ENCODE measurements at regions of chr5 and their contacts with region 1.

Region 1: GRCh38 chr5:135829681-135830383 is 4.6 kb upstream of the SLC25A48 start:
- DNase-seq: peak; percentile 82
- H3K4me3 ChIP-seq: peak overlapping the region in 1 of 2 experiments; percentile 54; a peak in 1 of 4 replicates
- H3K27ac ChIP-seq: no peak overlapping the region
- H3K4me1 ChIP-seq: no peaks in the 10 kb centered on the region; a peak in 1 of 4 replicates
- H3K27me3 ChIP-seq: peaks cover 32% of the 10 kb centered on the region
- CTCF ChIP-seq: peak; percentile 90
- EP300 ChIP-seq: no peak
- RAD21 ChIP-seq: peak; percentile 84

Region 2: DNA sequence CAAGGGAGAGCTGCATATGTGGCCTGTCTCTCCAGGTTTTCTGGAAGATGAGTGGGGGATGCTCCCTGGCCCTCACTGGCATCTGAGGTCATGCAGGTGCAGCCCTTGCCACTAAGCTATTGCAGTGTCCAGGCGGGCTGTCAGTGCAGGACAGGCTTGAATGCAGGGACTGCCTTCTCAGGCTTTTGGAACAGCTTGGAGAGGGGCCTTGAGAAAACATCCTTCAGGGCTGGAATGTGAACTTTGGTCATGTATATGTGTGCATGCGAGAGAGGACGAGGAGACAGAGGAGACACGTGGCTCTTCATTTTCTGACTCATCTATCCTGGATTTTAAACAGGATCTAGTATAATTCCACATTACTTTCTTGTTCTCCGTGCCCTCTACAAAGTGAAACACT is 521.1 kb before region 1 on chr5:
- CTCF ChIA-PET with region 1: no interaction called
- POLR2A ChIA-PET with region 1: no interaction called
- DNase-seq: no peak
- H3K4me3 ChIP-seq: no peak overlapping the region
- H3K27ac ChIP-seq: no peak overlapping the region
- H3K4me1 ChIP-seq: peaks cover 0 to 3% of the 10 kb centered on the region in 2 experiments; a peak in 1 of 4 replicates
- H3K27me3 ChIP-seq: no peaks in the 10 kb centered on the region
- CTCF ChIP-seq: no peak
- EP300 ChIP-seq: no peak
- RAD21 ChIP-seq: no peak

Region 3: DNA sequence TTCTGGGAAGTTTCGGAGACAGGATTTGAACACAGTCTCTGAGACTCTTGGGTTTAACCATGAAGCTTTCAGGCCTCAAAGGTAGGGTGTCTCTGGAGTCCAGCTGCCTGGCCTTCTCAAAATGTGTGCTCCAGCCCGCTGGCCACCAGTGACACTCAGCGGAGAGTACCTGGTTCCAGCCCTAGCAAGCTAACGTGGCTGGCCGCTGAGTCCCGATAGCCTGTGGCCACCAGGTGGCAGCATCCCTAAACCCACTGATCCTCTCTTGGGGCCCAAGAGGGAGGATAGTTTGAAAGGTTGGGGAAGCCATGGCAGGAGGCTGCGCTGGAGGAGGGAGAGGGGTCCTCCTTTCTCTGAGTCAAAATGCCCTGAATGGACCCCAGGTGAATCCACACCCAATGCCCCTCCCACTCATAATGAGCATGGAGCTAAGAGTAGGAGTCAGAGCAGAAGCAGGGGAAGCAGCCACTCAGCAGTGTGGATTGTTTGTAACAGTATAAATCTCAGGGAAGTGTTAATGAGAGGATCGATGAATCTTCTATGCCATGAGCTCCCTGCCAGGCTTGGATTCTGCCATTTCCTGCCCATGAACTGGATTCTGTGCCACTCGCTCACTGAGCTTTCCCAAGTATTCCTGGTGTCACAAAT is 372.3 kb before region 1 on chr5:
- CTCF ChIA-PET with region 1: interaction called, 30 read pairs
- POLR2A ChIA-PET with region 1: no interaction called
- DNase-seq: peak; percentile 80
- H3K4me3 ChIP-seq: peak overlapping the region in 1 of 2 experiments; percentile 25; a peak in 1 of 4 replicates
- H3K27ac ChIP-seq: no peak overlapping the region
- H3K4me1 ChIP-seq: no peaks in the 10 kb centered on the region; a peak in 1 of 4 replicates
- H3K27me3 ChIP-seq: peaks cover 44% of the 10 kb centered on the region
- CTCF ChIP-seq: peak; percentile 80
- EP300 ChIP-seq: no peak
- RAD21 ChIP-seq: peak; percentile 50

Region 4: GRCh38 chr5:135551593-135552447 is 278.0 kb before region 1 on chr5:
- CTCF ChIA-PET with region 1: interaction called, 113 read pairs
- POLR2A ChIA-PET with region 1: no interaction called
- DNase-seq: peak; percentile 79
- H3K4me3 ChIP-seq: no peak overlapping the region; a peak in 1 of 4 replicates
- H3K27ac ChIP-seq: no peak overlapping the region
- H3K4me1 ChIP-seq: no peaks in the 10 kb centered on the region
- H3K27me3 ChIP-seq: peaks cover 63% of the 10 kb centered on the region
- CTCF ChIP-seq: peak; percentile 90
- EP300 ChIP-seq: no peak
- RAD21 ChIP-seq: peak; percentile 86

Region 5: GRCh38 chr5:135560858-135561257 is 269.0 kb before region 1 on chr5:
- CTCF ChIA-PET with region 1: interaction called, 315 read pairs
- POLR2A ChIA-PET with region 1: no interaction called
- DNase-seq: peak; percentile 81
- H3K4me3 ChIP-seq: peak overlapping the region in 1 of 2 experiments; percentile 22; a peak in 1 of 4 replicates
- H3K27ac ChIP-seq: no peak overlapping the region
- H3K4me1 ChIP-seq: no peaks in the 10 kb centered on the region; a peak in 1 of 4 replicates
- H3K27me3 ChIP-seq: peaks cover 21% of the 10 kb centered on the region
- CTCF ChIP-seq: peak; percentile 84
- EP300 ChIP-seq: no peak
- RAD21 ChIP-seq: peak; percentile 85

Region 6: DNA sequence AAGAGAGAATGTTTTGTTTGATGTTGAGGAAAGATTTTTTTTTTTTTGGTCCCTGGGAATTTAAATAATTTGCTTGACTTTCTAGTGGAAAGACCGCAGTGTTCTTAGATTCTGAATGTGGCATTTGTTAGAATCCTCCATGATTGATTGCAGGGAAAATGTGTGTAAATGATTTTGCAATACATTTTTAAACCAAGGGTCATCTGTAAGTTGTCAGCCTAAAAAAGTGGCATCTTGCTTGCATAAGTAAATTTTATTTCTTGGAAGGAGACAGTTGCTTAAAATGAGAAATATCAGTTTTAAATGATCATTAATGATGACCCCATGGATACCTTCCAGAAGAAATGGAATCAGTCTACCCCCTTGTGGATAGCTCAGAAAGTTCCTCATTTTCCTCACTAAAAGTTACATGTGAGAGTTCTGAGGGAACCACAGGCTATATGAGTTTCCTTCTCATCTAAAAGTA is 100.5 kb before region 1 on chr5:
- CTCF ChIA-PET with region 1: interaction called, 12 read pairs
- POLR2A ChIA-PET with region 1: no interaction called
- DNase-seq: no peak
- H3K4me3 ChIP-seq: no peak overlapping the region
- H3K27ac ChIP-seq: no peak overlapping the region
- H3K4me1 ChIP-seq: no peaks in the 10 kb centered on the region
- H3K27me3 ChIP-seq: no peaks in the 10 kb centered on the region
- CTCF ChIP-seq: peak; percentile 36
- EP300 ChIP-seq: no peak
- RAD21 ChIP-seq: peak; percentile 44; the same call in 1 of the 2 replicates

Region 7: GRCh38 chr5:135813758-135814157 is 16.1 kb before region 1 on chr5:
- CTCF ChIA-PET with region 1: interaction called, 41 read pairs
- POLR2A ChIA-PET with region 1: no interaction called
- DNase-seq: no peak
- H3K4me3 ChIP-seq: no peak overlapping the region
- H3K27ac ChIP-seq: no peak overlapping the region
- H3K4me1 ChIP-seq: no peaks in the 10 kb centered on the region; a peak in 1 of 4 replicates
- H3K27me3 ChIP-seq: no peaks in the 10 kb centered on the region; the same call in 1 of the 2 replicates
- CTCF ChIP-seq: no peak
- EP300 ChIP-seq: no peak
- RAD21 ChIP-seq: no peak

Region 8: DNA sequence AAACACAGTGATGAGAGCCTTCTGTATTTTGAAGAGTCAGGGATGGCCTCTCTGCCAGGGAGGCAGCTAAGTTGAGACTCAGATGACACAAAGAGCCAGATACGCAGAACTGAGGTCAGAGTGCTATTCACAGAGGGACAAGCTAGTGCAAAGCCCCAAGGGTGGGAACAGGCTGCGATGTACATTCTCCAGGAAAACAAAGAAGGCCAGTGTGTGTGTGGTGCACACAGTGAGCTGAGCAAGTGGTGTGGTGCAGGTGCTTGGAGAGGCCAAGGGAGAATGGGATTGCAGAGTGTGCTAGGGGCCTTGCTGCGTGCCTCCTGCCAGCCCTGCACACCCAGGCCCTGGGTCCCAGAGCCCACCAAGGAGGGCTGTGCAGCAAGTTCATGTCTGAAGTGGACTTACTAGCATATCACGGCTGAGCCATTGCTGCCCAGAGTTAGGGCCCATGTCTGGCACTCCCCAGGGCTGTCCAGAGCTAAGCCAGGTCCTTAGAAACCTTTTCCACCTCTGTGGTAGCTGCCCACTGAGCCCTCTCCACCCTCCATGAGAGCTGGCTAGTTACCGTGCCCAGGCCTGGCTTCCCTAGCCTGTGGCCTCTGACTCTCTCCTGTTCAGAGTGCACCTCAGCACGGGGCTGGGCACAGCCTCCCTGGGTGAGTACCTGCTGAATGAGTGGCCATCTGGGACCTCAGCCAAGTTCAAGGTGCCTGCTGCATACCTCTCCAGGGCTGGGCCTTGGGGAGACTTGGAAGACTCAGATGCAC is 13.9 kb after region 1 on chr5:
- CTCF ChIA-PET with region 1: interaction called, 47 read pairs
- POLR2A ChIA-PET with region 1: no interaction called
- DNase-seq: no peak
- H3K4me3 ChIP-seq: no peak overlapping the region
- H3K27ac ChIP-seq: no peak overlapping the region
- H3K4me1 ChIP-seq: no peaks in the 10 kb centered on the region
- H3K27me3 ChIP-seq: no peaks in the 10 kb centered on the region; the same call in 1 of the 2 replicates
- CTCF ChIP-seq: no peak
- EP300 ChIP-seq: no peak
- RAD21 ChIP-seq: no peak

Measured in SK-N-SH (cell line).